ENCODE measurements at regions of chr10 and their contacts with region 1.

Region 1: DNA sequence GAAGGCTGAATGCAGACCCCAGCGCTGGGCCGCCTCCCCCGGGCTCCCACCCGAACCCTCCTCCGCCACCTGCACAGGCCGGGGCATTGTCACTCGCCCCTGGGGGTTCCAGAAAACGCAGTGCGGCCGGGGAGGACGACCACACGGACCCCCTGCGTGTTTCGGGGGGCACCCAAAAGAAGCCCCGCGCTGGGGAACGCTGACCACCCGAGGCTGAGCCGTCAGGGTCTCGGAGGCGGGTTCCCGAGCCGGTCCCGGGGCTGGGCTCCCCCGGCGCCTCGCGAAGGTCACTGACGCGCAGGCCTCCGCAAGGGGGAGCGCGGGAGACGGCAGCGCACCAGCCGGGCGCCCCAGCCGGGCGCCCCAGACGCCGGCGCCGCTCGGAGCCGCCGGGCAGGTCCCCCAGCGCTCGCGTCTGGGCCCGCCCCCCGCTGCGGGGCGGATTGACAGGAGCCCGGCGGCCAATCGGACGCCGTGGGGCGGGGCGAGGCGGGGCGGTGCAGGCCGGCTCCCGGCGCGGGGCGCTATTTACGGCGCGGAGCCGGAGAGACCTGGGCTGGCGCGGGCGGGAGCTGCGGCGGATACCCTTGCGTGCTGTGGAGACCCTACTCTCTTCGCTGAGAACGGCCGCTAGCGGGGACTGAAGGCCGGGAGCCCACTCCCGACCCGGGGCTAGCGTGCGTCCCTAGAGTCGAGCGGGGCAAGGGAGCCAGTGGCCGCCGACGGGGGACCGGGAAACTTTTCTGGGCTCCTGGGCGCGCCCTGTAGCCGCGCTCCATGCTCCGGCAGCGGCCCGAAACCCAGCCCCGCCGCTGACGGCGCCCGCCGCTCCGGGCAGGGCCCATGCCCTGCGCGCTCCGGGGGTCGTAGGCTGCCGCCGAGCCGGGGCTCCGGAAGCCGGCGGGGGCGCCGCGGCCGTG is at the start of gene BAMBI:
- DNase-seq: peak; percentile 94
- H3K4me3 ChIP-seq: peak within 1 kb of the TSS; percentile 65 to 79 (median 68)
- H3K27ac ChIP-seq: peak within 1 kb of the TSS; percentile 60 to 75 (median 70)
- H3K4me1 ChIP-seq: peaks cover 0 to 41% (median 35%) of the 10 kb centered on the region in 4 donors
- H3K27me3 ChIP-seq: peaks cover 86% of the 10 kb centered on the region
- CTCF ChIP-seq: peak; percentile 28 to 70 (median 57)
- EP300 ChIP-seq: no peak
- POLR2A ChIP-seq: peak; percentile 74
- total RNA-seq, gene BAMBI: 1.00 to 3.7 (median 1.2) TPM in 3 of 4 donors, not detected in the other

Region 2: DNA sequence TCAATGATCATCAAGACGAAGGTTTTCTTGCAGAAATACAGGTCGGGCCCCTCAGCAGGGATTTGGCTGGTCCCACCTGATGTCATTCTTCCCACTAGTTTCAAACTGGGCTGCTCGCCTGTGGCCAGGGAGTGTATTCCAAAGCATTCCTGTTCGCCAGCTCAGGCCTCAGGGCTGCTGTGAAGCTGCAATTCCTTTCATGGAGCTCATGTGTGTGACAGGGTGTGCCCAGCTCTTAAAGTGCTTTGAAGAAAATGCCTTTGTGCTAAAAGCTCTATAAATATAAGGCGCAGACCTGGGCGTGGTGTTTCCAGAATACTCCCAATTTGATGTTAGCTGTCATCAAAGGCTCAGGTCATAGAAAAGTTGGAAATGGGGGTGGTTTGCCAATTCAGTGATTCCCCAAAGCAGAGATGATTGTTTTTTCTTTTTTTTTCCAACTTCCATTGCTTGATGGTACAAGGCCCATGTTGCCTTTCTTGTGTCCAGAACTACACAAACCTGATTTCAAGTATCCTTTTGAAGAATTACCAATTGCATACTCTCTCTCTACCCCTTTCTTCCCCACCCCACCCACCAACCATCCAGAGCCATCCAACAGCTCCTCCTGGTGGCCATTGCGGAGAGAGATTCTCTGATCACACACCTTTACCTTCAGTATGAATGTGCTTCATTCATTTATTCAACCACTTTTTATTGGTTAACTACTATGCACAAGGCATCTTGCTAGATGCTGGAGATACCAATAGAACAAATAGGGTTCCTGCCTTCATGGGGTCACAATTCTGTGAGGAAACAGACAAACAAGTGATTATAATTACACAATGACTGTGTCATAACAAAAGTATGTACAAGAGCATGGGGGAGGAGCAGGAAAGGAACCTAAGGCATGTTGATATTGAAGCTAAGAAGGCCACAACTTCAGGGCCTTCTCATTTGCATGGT is 314.4 kb after region 1 on chr10:
- in situ Hi-C with region 1: loop called in 2 of 4 experiments (anchors 10 kb)
- intact Hi-C with region 1: no loop called
- DNase-seq: peak; percentile 35
- H3K4me3 ChIP-seq: no peak overlapping the region
- H3K27ac ChIP-seq: no peak overlapping the region
- H3K4me1 ChIP-seq: no peaks in the 10 kb centered on the region
- H3K27me3 ChIP-seq: no peaks in the 10 kb centered on the region
- CTCF ChIP-seq: peak; percentile 58 to 69 (median 63)
- EP300 ChIP-seq: no peak
- POLR2A ChIP-seq: no peak

Measured in transverse colon (tissue), 4 donors.